H1 (cell line): ENCODE measurements at regions of chr10 and their contacts with region 1.

Region 1: GRCh38 chr10:79195091-79195923 is 126.5 kb downstream of the ZMIZ1 start:
- DNase-seq: peak; percentile 79 to 89
- H3K4me3 ChIP-seq: no peak overlapping the region
- H3K27ac ChIP-seq: no peak overlapping the region; the same call in 1 of the 2 replicates
- H3K4me1 ChIP-seq: peaks cover 0 to 14% (median 5%) of the 10 kb centered on the region in 4 experiments; a peak in 5 of 7 replicates
- H3K27me3 ChIP-seq: no peaks in the 10 kb centered on the region
- CTCF ChIP-seq: peak; percentile 92 to 98 (median 95)
- EP300 ChIP-seq: no peak
- POLR2A ChIP-seq: no peak
- RAD21 ChIP-seq: peak; percentile 98

Region 2: DNA sequence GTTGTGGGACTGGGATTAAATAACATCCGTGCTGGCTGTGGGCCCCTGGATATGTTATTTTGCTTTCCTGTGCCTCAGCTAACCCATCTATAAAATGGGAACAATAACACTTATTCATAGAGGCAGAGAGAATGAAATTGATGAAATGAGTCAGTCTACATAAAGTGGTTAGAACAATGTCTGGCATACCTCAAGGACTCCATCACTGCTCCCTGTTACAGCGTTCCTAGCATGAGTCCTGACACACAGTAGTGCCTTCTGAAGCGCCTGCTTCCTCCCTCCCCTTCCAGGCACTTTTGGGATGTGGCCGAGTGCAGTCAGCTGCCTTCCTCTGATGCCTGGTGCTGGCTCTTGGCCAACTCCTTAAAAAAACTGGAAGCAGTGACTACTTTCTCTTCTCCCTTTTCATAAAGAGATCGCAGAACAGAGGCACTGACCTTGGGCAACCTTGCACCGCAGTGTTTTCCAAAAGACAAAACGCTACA is 234.9 kb before region 1 on chr10:
- CTCF ChIA-PET with region 1: interaction called, 10 read pairs
- POLR2A ChIA-PET with region 1: no interaction called
- DNase-seq: no peak
- H3K4me3 ChIP-seq: no peak overlapping the region
- H3K27ac ChIP-seq: no peak overlapping the region
- H3K4me1 ChIP-seq: peaks cover 6 to 21% (median 14%) of the 10 kb centered on the region in 4 experiments
- H3K27me3 ChIP-seq: no peaks in the 10 kb centered on the region; a peak in 3 of 7 replicates
- CTCF ChIP-seq: no peak
- EP300 ChIP-seq: no peak
- POLR2A ChIP-seq: no peak
- RAD21 ChIP-seq: no peak

Region 3: DNA sequence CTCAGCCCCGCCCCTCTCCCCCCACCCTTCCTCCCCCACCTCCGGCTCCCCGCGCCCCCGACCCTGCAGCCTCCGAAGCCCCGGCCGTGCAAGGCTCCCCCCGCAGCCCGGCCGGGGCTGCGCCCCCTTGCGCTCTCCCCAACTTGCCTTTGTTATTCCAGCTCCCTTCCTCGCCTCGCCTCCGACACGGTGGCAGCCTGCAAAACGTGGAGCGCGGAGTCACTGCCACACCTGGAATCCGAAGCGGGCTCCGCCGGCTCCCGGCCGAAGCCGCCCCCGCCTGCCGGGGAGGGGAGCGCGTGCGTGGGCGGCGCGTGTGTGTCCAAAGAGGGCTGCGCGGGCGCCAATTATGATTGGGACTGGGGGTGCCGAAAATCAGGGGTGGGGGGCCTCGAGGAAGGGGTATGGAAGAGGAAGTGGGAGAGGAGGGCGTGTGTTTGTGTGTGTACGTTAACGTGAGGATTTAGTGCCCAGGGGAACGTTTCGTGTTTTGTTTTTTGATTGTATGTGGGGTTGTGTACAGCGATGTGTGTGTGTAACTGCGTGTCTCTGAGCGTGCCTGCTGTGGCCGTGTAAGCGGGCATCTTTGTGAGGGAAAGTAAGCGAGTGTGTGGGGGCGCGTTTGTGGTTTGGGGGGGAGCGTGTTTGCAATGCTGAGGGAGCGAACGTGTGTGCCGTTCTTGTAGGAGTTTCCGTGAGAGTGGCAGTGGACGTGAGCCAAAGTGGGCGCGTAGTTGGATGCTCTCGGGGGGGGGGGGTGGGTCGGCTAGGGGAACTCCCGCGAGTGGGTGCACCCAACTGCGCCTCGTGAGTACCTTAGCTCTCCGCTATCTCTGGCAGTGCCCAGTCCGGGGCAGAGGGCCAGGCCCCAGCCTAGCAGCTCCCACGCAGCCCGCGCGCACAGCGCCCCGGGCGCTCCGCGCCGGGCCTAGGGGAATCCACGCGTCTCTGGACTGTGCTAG is 127.8 kb before region 1 on chr10:
- CTCF ChIA-PET with region 1: interaction called, 16 read pairs
- POLR2A ChIA-PET with region 1: no interaction called
- DNase-seq: peak; percentile 85 to 96
- H3K4me3 ChIP-seq: peak overlapping the region; percentile 73 to 96 (median 80)
- H3K27ac ChIP-seq: no peak overlapping the region
- H3K4me1 ChIP-seq: peaks cover 12 to 30% (median 16%) of the 10 kb centered on the region in 4 experiments
- H3K27me3 ChIP-seq: peaks cover 0 to 14% (median 9%) of the 10 kb centered on the region in 4 experiments; a peak in 4 of 7 replicates
- CTCF ChIP-seq: peak; percentile 26 to 37 (median 28); a peak in 3 of 4 replicates
- EP300 ChIP-seq: peak in 1 of 2 experiments; percentile 84; a peak in 1 of 3 replicates
- POLR2A ChIP-seq: no peak
- RAD21 ChIP-seq: peak; percentile 38 to 60

Region 4: DNA sequence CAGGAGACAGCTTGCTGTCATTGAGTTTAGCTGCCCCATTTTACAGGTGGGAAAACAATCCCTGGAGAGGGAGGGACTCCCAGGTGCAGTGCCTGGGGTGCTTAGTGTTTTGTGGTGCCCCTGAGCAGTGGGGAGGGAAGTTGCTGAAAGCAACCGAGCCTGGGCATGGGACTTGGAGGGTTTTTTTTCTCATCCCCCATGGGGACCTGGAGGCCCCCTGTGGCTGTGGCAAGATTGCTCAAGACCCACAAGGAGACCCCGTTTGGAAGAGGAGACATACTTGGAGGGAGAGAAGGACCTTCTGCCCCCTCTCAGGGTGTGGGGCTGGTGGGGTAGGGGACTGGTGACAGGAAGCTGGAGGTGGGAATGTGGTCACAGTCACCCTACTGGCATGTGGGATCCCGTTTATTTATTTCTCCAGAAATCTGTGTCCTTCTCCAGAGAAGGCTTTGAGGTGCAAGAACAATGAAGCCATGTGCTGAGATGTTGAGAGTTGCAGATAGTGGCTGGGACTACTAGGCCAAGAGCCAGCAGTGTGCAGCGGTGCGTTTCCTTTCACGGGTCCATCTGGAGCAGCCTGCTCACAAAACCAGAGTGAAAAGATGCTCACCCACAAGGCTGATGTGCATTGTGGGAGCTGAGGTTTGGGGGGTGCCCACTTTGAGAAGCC is 105.0 kb before region 1 on chr10:
- CTCF ChIA-PET with region 1: interaction called, 13 read pairs
- POLR2A ChIA-PET with region 1: no interaction called
- DNase-seq: no peak
- H3K4me3 ChIP-seq: no peak overlapping the region
- H3K27ac ChIP-seq: no peak overlapping the region
- H3K4me1 ChIP-seq: peaks cover 0 to 19% (median 7%) of the 10 kb centered on the region in 4 experiments; a peak in 5 of 7 replicates
- H3K27me3 ChIP-seq: no peaks in the 10 kb centered on the region
- CTCF ChIP-seq: no peak
- EP300 ChIP-seq: no peak
- POLR2A ChIP-seq: no peak
- RAD21 ChIP-seq: no peak

Region 5: DNA sequence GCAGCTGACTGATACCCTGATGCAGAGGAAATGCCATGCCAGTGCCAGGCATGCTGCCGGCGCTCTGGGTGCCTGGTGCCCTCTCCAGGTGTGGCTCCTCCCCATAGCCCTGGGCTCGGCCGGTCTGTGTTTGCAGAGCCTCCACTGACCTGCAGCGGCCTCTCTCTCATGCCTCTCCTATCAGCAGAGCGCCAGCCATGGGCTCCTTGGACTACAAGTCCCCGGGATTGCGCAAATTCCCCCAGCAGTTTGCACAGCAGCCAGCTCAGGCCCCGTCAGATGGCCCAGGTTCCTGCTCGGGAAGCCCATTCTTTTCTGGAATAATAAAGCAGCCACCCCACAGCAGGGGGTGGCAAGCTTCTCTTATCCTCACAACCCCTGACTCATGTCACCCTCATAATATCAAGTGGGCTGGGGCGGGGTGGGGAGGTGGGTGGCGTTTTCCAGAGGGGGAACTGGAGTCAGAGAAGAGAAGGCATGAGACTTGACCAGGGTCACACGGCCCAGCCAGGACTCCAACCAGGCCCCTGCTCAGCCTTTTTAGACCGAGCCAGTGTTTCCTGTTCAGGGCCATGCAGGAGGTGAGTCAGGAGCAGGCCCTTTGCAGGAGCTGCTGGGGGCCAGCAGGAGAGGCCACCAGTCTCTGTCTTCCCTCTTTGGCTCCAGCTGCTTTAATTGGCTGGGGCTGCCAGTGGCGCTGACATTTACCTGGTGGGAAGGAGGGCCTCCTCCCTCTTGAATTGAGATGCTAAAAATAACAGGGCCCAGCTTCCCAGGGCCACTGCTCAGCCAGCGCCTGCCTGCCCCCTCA is 68.0 kb before region 1 on chr10:
- CTCF ChIA-PET with region 1: interaction called, 56 read pairs
- POLR2A ChIA-PET with region 1: no interaction called
- DNase-seq: peak in 1 of 2 experiments; percentile 36
- H3K4me3 ChIP-seq: no peak overlapping the region
- H3K27ac ChIP-seq: no peak overlapping the region; the same call in 1 of the 2 replicates
- H3K4me1 ChIP-seq: peaks cover 26 to 66% (median 41%) of the 10 kb centered on the region in 4 experiments
- H3K27me3 ChIP-seq: no peaks in the 10 kb centered on the region
- CTCF ChIP-seq: no peak
- EP300 ChIP-seq: no peak
- POLR2A ChIP-seq: no peak
- RAD21 ChIP-seq: peak in 1 of 2 experiments; percentile 18; a peak in 1 of 4 replicates

Region 6: GRCh38 chr10:79178614-79179163 is 16.6 kb before region 1 on chr10:
- CTCF ChIA-PET with region 1: interaction called, 396 read pairs
- POLR2A ChIA-PET with region 1: interaction called, 3 read pairs
- DNase-seq: no peak
- H3K4me3 ChIP-seq: no peak overlapping the region
- H3K27ac ChIP-seq: 0 out of 2 replicates have a peak overlapping the region, but pooled peaks have one; percentile 28
- H3K4me1 ChIP-seq: peaks cover 14 to 27% (median 19%) of the 10 kb centered on the region in 4 experiments
- H3K27me3 ChIP-seq: no peaks in the 10 kb centered on the region; a peak in 1 of 7 replicates
- CTCF ChIP-seq: no peak
- EP300 ChIP-seq: no peak
- POLR2A ChIP-seq: no peak
- RAD21 ChIP-seq: no peak